HCT116 (cell line): ENCODE measurements at regions of chr7 and their contacts with region 1.

Region 1: DNA sequence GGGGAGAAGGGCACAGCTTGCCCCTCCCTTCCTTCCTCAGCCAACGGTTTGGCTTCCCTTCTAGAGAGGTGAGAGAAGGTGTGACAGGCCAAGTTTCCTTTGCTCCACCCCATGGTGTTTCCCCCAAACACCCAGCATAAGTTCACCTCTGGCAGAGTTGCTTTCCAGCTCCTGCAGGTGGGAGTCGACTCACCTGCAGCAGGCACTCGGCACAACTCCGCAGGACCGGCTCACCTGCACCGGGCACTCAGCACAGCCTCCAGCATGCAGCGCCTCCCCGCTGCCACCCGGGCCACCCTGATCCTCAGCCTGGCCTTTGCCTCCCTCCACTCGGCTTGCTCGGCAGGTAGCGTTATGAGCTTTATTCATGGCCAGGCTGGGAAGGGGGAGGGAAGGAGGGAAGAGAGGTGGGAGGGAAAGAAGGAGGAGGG is at the starts of genes ATP6V0A4 and TMEM213:
- DNase-seq: no peak
- ATAC-seq: no peak
- H3K4me3 ChIP-seq: no peak within 1 kb of the TSS
- H3K27ac ChIP-seq: no peak within 1 kb of the TSS
- H3K4me1 ChIP-seq: no peaks in the 10 kb centered on the region
- H3K27me3 ChIP-seq: no peaks in the 10 kb centered on the region
- CTCF ChIP-seq: no peak
- POLR2A ChIP-seq: no peak
- RAD21 ChIP-seq: no peak
- total RNA-seq, gene ATP6V0A4: not detected
- total RNA-seq, gene TMEM213: not detected

Region 2: GRCh38 chr7:138911007-138911406 is 113.2 kb after region 1 on chr7:
- CTCF ChIA-PET with region 1: no interaction called
- POLR2A ChIA-PET with region 1: no interaction called
- RAD21 ChIA-PET with region 1: no interaction called
- intact Hi-C with region 1: loop called (anchors 2 kb)
- DNase-seq: no peak
- ATAC-seq: no peak
- H3K4me3 ChIP-seq: no peak overlapping the region
- H3K27ac ChIP-seq: no peak overlapping the region
- H3K4me1 ChIP-seq: peaks cover 0 to 5% of the 10 kb centered on the region in 2 experiments; a peak in 1 of 4 replicates
- H3K27me3 ChIP-seq: no peaks in the 10 kb centered on the region
- CTCF ChIP-seq: no peak
- POLR2A ChIP-seq: no peak
- RAD21 ChIP-seq: no peak